Upper lobe of right lung (tissue), 1 donor: ENCODE measurements at regions of chr18 and their contacts with region 1.

Region 1: DNA sequence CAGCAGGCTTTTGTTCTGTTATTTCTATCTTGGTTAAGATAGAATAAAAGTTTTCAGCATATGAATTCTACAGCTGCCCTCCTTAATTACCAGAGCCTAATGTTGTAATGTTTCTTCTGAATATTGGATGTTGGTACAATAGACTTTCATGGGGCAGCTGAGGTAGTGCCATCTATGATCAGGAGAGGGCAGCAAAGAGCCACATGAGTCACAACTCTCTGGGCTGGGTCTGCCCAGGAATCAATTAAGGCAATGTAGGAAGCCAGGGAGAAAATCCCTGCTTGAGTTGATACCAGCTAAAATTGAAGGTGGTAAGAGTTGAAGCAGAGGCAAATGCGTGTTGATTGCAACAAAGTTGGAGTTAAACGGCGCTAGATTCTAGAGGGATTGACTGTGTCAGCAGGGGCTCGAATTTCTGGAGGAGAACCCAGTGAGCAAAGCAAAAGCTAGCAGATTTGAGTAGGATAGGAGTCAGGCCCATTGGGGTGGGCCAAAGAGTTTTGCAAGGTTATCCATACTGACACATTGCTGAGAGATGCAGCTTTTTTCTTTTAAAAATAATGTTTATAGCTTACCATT is 10.6 kb upstream of the MC5R start:
- DNase-seq: no peak
- ATAC-seq: peak; percentile 91
- H3K4me3 ChIP-seq: no peak overlapping the region
- H3K27ac ChIP-seq: no peak overlapping the region
- H3K4me1 ChIP-seq: no peaks in the 10 kb centered on the region
- H3K27me3 ChIP-seq: no peaks in the 10 kb centered on the region
- CTCF ChIP-seq: peak; percentile 84

Region 2: GRCh38 chr18:14086458-14087231 is 273.3 kb after region 1 on chr18:
- intact Hi-C with region 1: loop called (anchors 10 kb)
- DNase-seq: no peak
- ATAC-seq: peak; percentile 60
- H3K4me3 ChIP-seq: no peak overlapping the region
- H3K27ac ChIP-seq: no peak overlapping the region
- H3K4me1 ChIP-seq: no peaks in the 10 kb centered on the region
- H3K27me3 ChIP-seq: no peaks in the 10 kb centered on the region
- CTCF ChIP-seq: peak; percentile 56